Activated B cell treated with CpG ODN at 0.5 μM for 24 hours (primary cell): ENCODE measurements at regions of chr3 and their contacts with region 1.

Region 1: GRCh38 chr3:53555068-53555588 is 60.7 kb downstream of the CACNA1D start:
- DNase-seq: no peak
- ATAC-seq: peak; percentile 76
- H3K4me3 Mint-ChIP-seq: peak overlapping the region; percentile 56
- H3K27ac Mint-ChIP-seq: peak overlapping the region; percentile 79
- H3K4me1 Mint-ChIP-seq: peaks cover 15% of the 10 kb centered on the region
- H3K27me3 Mint-ChIP-seq: no peaks in the 10 kb centered on the region
- CTCF ChIP-seq: no peak

Region 2: DNA sequence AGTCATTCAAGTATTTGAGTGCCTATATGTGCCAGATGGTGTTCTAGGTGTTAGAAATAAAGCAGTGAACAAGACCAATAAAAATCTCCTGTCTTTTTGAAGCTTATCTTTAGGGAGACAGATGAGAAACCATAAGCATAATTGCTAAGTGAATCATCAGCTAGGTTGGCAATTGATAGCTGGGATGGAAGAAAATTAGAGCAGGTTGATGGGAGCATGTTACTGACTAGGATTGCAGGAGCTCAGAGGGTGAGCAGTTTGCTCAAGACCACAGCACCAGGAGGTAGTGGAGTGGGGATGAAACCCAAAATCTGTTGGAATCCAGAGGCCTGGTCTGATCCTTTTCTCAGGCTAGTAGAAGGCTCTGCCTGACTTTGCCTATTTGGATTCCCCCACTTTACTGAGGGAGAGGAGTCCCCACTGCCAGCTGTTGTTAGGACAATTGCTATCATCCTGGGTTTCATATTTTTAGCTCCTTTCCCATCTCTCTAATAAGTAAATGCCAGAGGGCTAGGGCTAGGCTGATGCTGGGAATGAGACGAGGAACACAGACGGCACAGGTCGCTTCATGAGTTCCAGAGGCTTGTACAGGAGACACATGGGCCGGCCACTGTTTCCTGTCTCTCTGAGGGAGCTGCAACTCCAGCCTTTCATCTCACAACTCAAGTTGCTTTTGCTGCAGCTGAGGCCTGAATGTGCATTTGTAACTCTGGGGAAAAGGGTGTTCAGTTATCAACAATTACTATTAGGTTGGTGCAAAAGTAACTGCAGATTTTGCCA is 42.2 kb after region 1 on chr3:
- CTCF ChIA-PET with region 1: no interaction called
- POLR2A ChIA-PET with region 1: no interaction called
- intact Hi-C with region 1: no loop called
- DNase-seq: no peak
- ATAC-seq: no peak
- H3K4me3 Mint-ChIP-seq: no peak overlapping the region
- H3K27ac Mint-ChIP-seq: no peak overlapping the region
- H3K4me1 Mint-ChIP-seq: peaks cover 8% of the 10 kb centered on the region
- H3K27me3 Mint-ChIP-seq: no peaks in the 10 kb centered on the region
- CTCF ChIP-seq: no peak

Region 3: GRCh38 chr3:53613125-53613524 is 58.0 kb after region 1 on chr3:
- CTCF ChIA-PET with region 1: no interaction called
- POLR2A ChIA-PET with region 1: no interaction called
- intact Hi-C with region 1: loop called (anchors 5 kb)
- DNase-seq: no peak
- ATAC-seq: peak; percentile 34
- H3K4me3 Mint-ChIP-seq: no peak overlapping the region
- H3K27ac Mint-ChIP-seq: no peak overlapping the region
- H3K4me1 Mint-ChIP-seq: peaks cover 27% of the 10 kb centered on the region
- H3K27me3 Mint-ChIP-seq: peaks cover 8% of the 10 kb centered on the region
- CTCF ChIP-seq: no peak

Region 4: GRCh38 chr3:53892286-53892637 is 337.1 kb after region 1 on chr3:
- CTCF ChIA-PET with region 1: no interaction called
- POLR2A ChIA-PET with region 1: no interaction called
- intact Hi-C with region 1: no loop called
- DNase-seq: no peak
- ATAC-seq: no peak
- H3K4me3 Mint-ChIP-seq: peak overlapping the region; percentile 93
- H3K27ac Mint-ChIP-seq: peak overlapping the region; percentile 97
- H3K4me1 Mint-ChIP-seq: peaks cover 34% of the 10 kb centered on the region
- H3K27me3 Mint-ChIP-seq: peaks cover 15% of the 10 kb centered on the region
- CTCF ChIP-seq: no peak

Region 5: DNA sequence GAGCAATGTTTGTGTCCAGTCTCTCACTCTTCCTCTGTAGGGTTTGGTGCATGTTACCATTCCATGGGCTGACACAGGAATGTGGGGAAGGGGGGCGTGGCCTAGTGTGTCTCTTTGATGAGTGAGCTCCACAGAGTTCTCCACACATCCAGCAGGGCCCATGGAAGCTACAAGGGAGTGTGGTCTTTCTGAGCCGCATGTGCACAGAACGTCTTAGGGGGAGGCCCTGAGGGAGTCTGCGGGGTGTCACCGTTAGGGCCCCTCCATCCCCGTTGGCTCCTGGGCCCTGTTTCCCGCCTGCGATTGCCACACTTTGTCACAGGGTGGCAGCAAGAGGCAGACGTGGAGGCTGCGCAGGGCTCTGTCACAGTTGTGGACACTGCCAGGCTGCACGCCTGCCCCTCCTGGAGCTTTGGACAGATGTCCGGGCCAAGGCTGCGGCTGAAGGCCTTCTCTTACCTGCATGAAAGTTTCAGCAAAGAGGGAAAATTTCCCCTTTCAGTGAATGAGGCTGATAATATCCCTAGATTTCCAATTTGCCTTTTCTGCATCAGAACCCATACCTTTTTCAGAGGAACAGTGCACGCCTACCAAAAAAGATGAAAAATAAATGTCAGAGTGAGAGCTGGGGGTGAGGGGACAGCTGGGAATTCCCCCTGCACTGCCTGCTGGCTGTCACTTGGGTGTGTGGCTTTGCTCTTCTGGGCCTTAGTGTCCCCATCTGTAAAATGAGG is 591.5 kb after region 1 on chr3:
- CTCF ChIA-PET with region 1: no interaction called
- POLR2A ChIA-PET with region 1: no interaction called
- intact Hi-C with region 1: no loop called
- DNase-seq: no peak
- ATAC-seq: no peak
- H3K4me3 Mint-ChIP-seq: no peak overlapping the region
- H3K27ac Mint-ChIP-seq: no peak overlapping the region
- H3K4me1 Mint-ChIP-seq: no peaks in the 10 kb centered on the region
- H3K27me3 Mint-ChIP-seq: peaks cover 18% of the 10 kb centered on the region
- CTCF ChIP-seq: no peak